Mammary epithelial cell (primary cell): ENCODE measurements at regions of chr9 and their contacts with region 1.

Region 1: GRCh38 chr9:136558373-136558772 is 12.5 kb upstream of the NOTCH1 start:
- DNase-seq: peak; percentile 49
- H3K4me3 ChIP-seq: no peak overlapping the region
- H3K27ac ChIP-seq: no peak overlapping the region
- H3K4me1 ChIP-seq: peaks cover 6% of the 10 kb centered on the region
- H3K27me3 ChIP-seq: no peaks in the 10 kb centered on the region
- CTCF ChIP-seq: no peak

Region 2: GRCh38 chr9:136410500-136411287 is 147.7 kb before region 1 on chr9 and contains the starts of genes ENTR1 and PMPCA:
- CTCF ChIA-PET with region 1: no interaction called
- dilution Hi-C with region 1: loop called (anchors 5 kb)
- in situ Hi-C with region 1: no loop called
- intact Hi-C with region 1: no loop called
- DNase-seq: peak; percentile 86
- H3K4me3 ChIP-seq: peak within 1 kb of the TSS; percentile 68 to 96 (median 91)
- H3K27ac ChIP-seq: peak within 1 kb of the TSS; percentile 80
- H3K4me1 ChIP-seq: peaks cover 17% of the 10 kb centered on the region
- H3K27me3 ChIP-seq: no peaks in the 10 kb centered on the region
- CTCF ChIP-seq: no peak
- total RNA-seq, gene ENTR1: 28.5 to 62.0 TPM
- total RNA-seq, gene PMPCA: 41.7 to 68.8 TPM

Region 3: GRCh38 chr9:136467766-136468563 is 90.4 kb before region 1 on chr9:
- CTCF ChIA-PET with region 1: no interaction called
- dilution Hi-C with region 1: no loop called
- in situ Hi-C with region 1: no loop called
- intact Hi-C with region 1: no loop called
- DNase-seq: no peak
- H3K4me3 ChIP-seq: no peak overlapping the region
- H3K27ac ChIP-seq: no peak overlapping the region
- H3K4me1 ChIP-seq: no peaks in the 10 kb centered on the region
- H3K27me3 ChIP-seq: no peaks in the 10 kb centered on the region
- CTCF ChIP-seq: no peak

Region 4: GRCh38 chr9:136655536-136656182 is 97.3 kb after region 1 on chr9:
- CTCF ChIA-PET with region 1: no interaction called
- dilution Hi-C with region 1: loop called (anchors 5 kb)
- in situ Hi-C with region 1: no loop called
- intact Hi-C with region 1: no loop called
- DNase-seq: no peak
- H3K4me3 ChIP-seq: no peak overlapping the region
- H3K27ac ChIP-seq: no peak overlapping the region
- H3K4me1 ChIP-seq: no peaks in the 10 kb centered on the region
- H3K27me3 ChIP-seq: no peaks in the 10 kb centered on the region
- CTCF ChIP-seq: no peak

Region 5: GRCh38 chr9:136671646-136672430 is 113.5 kb after region 1 on chr9:
- CTCF ChIA-PET with region 1: no interaction called
- dilution Hi-C with region 1: no loop called
- in situ Hi-C with region 1: no loop called
- intact Hi-C with region 1: no loop called
- DNase-seq: no peak
- H3K4me3 ChIP-seq: no peak overlapping the region
- H3K27ac ChIP-seq: no peak overlapping the region
- H3K4me1 ChIP-seq: no peaks in the 10 kb centered on the region
- H3K27me3 ChIP-seq: no peaks in the 10 kb centered on the region
- CTCF ChIP-seq: peak; percentile 59 to 80